HCT116 (cell line): ENCODE measurements at regions of chr3 and their contacts with region 1.

Region 1: GRCh38 chr3:160565442-160566403 is at the start of gene KPNA4:
- DNase-seq: peak; percentile 92
- ATAC-seq: peak; percentile 88
- H3K4me3 ChIP-seq: peak within 1 kb of the TSS; percentile 71 to 79
- H3K27ac ChIP-seq: peak within 1 kb of the TSS; percentile 95
- H3K4me1 ChIP-seq: peaks cover 6 to 23% of the 10 kb centered on the region in 2 experiments; a peak in 3 of 4 replicates
- H3K27me3 ChIP-seq: no peaks in the 10 kb centered on the region
- CTCF ChIP-seq: no peak
- POLR2A ChIP-seq: peak; percentile 68
- RAD21 ChIP-seq: no peak
- total RNA-seq, gene KPNA4: 43.1 TPM

Region 2: DNA sequence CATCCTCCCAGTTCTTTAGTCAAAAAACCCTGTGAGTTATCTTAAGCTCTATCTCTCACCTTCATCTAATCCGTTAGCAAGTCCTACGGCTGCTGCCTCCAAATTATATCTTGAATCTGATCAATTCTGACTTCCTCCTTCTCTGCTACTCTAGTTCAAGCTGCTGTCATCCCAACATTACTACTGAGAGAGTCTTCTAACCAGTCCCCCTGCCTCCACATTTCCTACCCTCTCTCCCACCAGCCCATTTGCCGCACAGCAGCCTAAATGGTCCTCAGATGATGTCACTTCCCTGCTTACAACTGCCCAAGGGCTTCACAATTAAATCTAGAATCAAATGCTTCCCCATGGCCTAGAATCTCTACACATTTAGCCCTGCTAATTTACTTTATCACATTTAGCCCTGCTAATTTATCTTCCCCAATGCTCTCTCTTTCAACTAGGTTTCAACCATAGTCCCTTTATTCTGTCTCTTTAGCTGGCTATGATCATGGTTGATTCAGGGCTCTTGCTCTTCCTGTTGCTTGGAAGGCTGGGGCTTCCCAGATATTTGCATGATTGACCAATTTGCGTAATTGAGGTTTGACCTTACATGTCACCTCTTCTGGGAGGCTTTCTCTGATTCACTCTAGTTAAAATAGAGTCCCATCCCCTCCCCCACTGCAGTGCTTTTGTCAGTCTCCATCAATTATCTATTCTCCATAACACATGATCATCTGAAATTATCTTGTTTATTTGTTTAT is 100.2 kb after region 1 on chr3:
- CTCF ChIA-PET with region 1: no interaction called
- POLR2A ChIA-PET with region 1: no interaction called
- RAD21 ChIA-PET with region 1: no interaction called
- intact Hi-C with region 1: loop called (anchors 5 kb)
- DNase-seq: no peak
- ATAC-seq: no peak
- H3K4me3 ChIP-seq: no peak overlapping the region
- H3K27ac ChIP-seq: no peak overlapping the region
- H3K4me1 ChIP-seq: peaks cover 25 to 33% of the 10 kb centered on the region in 2 experiments
- H3K27me3 ChIP-seq: no peaks in the 10 kb centered on the region
- CTCF ChIP-seq: no peak
- POLR2A ChIP-seq: no peak
- RAD21 ChIP-seq: no peak